Activated CD8-positive, alpha-beta T cell treated with anti-CD3 and anti-CD28 coated beads for 36 hours (primary cell): ENCODE measurements at regions of chr6 and their contacts with region 1.

Region 1: GRCh38 chr6:17706580-17707370 is at the start of gene NUP153:
- DNase-seq: peak; percentile 99
- ATAC-seq: peak; percentile 69
- H3K4me3 Mint-ChIP-seq: peak within 1 kb of the TSS; percentile 97
- H3K27ac Mint-ChIP-seq: peak within 1 kb of the TSS; percentile 98
- H3K4me1 Mint-ChIP-seq: peaks cover 25% of the 10 kb centered on the region
- H3K27me3 Mint-ChIP-seq: no peaks in the 10 kb centered on the region
- CTCF ChIP-seq: no peak
- total RNA-seq, gene NUP153: 76.4 to 78.2 TPM

Region 2: GRCh38 chr6:17551383-17551958 is 155.3 kb before region 1 on chr6:
- CTCF ChIA-PET with region 1: no interaction called
- POLR2A ChIA-PET with region 1: no interaction called
- intact Hi-C with region 1: no loop called
- DNase-seq: no peak
- ATAC-seq: no peak
- H3K4me3 Mint-ChIP-seq: no peak overlapping the region
- H3K27ac Mint-ChIP-seq: no peak overlapping the region
- H3K4me1 Mint-ChIP-seq: no peaks in the 10 kb centered on the region
- H3K27me3 Mint-ChIP-seq: peaks cover 4% of the 10 kb centered on the region
- CTCF ChIP-seq: no peak

Region 3: DNA sequence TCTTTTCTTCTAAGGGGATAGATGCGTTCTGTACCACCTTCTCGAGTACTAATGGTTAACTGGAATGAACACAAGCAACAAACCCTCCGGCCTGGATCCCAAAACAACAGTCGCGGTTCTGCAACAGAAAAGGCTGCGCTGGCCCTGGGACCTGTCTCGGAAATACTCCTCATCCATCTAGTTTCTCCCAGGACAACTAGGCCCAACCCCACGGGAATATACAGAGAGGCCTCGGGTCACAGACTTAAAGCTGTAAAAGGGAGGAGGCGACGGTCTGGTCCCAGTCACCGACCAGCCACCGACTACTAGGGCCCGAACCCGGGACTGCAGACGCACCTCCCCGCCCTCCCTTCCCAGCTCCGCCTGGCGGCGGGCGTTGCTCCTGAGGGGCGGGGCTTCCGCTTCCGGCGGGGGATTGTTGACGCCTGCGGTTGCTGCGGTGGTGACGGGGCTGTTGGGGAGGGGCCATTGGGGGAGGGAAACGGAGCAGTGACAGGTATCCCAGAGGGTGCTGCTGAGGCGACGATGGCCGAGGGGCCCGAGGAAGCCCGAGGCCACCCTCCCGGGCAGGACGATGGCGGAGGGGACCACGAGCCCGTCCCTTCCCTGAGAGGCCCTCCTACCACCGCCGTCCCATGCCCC is 106.8 kb before region 1 on chr6 and contains the start of gene FAM8A1:
- CTCF ChIA-PET with region 1: interaction called, 21 read pairs
- POLR2A ChIA-PET with region 1: interaction called, 15 read pairs
- intact Hi-C with region 1: no loop called
- DNase-seq: peak; percentile 96
- ATAC-seq: peak; percentile 90
- H3K4me3 Mint-ChIP-seq: peak within 1 kb of the TSS; percentile 77
- H3K27ac Mint-ChIP-seq: peak within 1 kb of the TSS; percentile 82
- H3K4me1 Mint-ChIP-seq: peaks cover 26% of the 10 kb centered on the region
- H3K27me3 Mint-ChIP-seq: no peaks in the 10 kb centered on the region
- CTCF ChIP-seq: peak; percentile 51
- total RNA-seq, gene FAM8A1: 3.2 to 3.8 TPM

Region 4: GRCh38 chr6:17656092-17656491 is 50.7 kb before region 1 on chr6:
- CTCF ChIA-PET with region 1: interaction called, 3 read pairs
- POLR2A ChIA-PET with region 1: interaction called, 3 read pairs
- intact Hi-C with region 1: loop called (anchors 10 kb)
- DNase-seq: no peak
- ATAC-seq: no peak
- H3K4me3 Mint-ChIP-seq: no peak overlapping the region
- H3K27ac Mint-ChIP-seq: no peak overlapping the region
- H3K4me1 Mint-ChIP-seq: peaks cover 24% of the 10 kb centered on the region
- H3K27me3 Mint-ChIP-seq: no peaks in the 10 kb centered on the region
- CTCF ChIP-seq: no peak

Region 5: DNA sequence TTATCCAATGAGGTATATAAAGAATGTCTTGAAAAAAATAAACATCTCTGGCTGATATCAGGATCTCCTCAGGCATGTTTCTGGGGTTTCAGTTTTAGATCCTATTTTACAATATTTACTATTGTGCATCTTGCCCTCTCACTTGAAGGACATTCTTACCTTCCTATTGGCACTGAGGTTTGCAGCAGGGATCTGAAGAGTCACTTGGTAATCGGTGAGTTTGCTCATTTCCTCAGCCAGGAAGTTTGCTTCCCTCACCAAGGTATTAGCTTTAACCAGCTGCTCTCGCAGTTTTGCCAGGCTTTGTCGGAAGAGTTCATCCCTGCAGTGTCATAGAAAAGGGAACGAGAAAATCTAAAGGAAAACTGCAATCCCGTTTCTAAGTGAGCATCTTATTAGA is 101.8 kb after region 1 on chr6:
- CTCF ChIA-PET with region 1: interaction called, 21 read pairs
- POLR2A ChIA-PET with region 1: no interaction called
- intact Hi-C with region 1: loop called (anchors 10 kb)
- DNase-seq: no peak
- ATAC-seq: no peak
- H3K4me3 Mint-ChIP-seq: no peak overlapping the region
- H3K27ac Mint-ChIP-seq: no peak overlapping the region
- H3K4me1 Mint-ChIP-seq: no peaks in the 10 kb centered on the region
- H3K27me3 Mint-ChIP-seq: peaks cover 13% of the 10 kb centered on the region
- CTCF ChIP-seq: no peak